Right lobe of liver (tissue), 6 donors: ENCODE measurements at regions of chr2 and their contacts with region 1.

Region 1: GRCh38 chr2:26144953-26145680 is 27.8 kb upstream of the GAREM2 start:
- DNase-seq: peak in 2 of 3 donors; percentile 45 to 68
- ATAC-seq: peak; percentile 87 to 91 (median 90)
- H3K4me3 ChIP-seq: no peak overlapping the region
- H3K27ac ChIP-seq: no peak overlapping the region
- H3K4me1 ChIP-seq: no peaks in the 10 kb centered on the region
- H3K27me3 ChIP-seq: no peaks in the 10 kb centered on the region
- CTCF ChIP-seq: peak; percentile 67 to 83 (median 74)
- POLR2A ChIP-seq: no peak

Region 2: GRCh38 chr2:25951071-25951547 is 194.0 kb before region 1 on chr2:
- intact Hi-C with region 1: loop called in 1 of 2 experiments (anchors 10 kb)
- DNase-seq: peak; percentile 84 to 85 (median 85)
- ATAC-seq: peak; percentile 99 to 100 (median 99)
- H3K4me3 ChIP-seq: no peak overlapping the region
- H3K27ac ChIP-seq: no peak overlapping the region
- H3K4me1 ChIP-seq: no peaks in the 10 kb centered on the region
- H3K27me3 ChIP-seq: no peaks in the 10 kb centered on the region
- CTCF ChIP-seq: peak; percentile 95 to 96 (median 96)
- POLR2A ChIP-seq: no peak

Region 3: GRCh38 chr2:25991965-25992364 is 153.2 kb before region 1 on chr2:
- intact Hi-C with region 1: loop called in 1 of 2 experiments (anchors 10 kb)
- DNase-seq: no peak
- ATAC-seq: peak; percentile 20 to 49 (median 42)
- H3K4me3 ChIP-seq: no peak overlapping the region
- H3K27ac ChIP-seq: no peak overlapping the region
- H3K4me1 ChIP-seq: peaks cover 0 to 3% (median 0%) of the 10 kb centered on the region in 4 donors
- H3K27me3 ChIP-seq: no peaks in the 10 kb centered on the region
- CTCF ChIP-seq: no peak
- POLR2A ChIP-seq: no peak

Region 4: DNA sequence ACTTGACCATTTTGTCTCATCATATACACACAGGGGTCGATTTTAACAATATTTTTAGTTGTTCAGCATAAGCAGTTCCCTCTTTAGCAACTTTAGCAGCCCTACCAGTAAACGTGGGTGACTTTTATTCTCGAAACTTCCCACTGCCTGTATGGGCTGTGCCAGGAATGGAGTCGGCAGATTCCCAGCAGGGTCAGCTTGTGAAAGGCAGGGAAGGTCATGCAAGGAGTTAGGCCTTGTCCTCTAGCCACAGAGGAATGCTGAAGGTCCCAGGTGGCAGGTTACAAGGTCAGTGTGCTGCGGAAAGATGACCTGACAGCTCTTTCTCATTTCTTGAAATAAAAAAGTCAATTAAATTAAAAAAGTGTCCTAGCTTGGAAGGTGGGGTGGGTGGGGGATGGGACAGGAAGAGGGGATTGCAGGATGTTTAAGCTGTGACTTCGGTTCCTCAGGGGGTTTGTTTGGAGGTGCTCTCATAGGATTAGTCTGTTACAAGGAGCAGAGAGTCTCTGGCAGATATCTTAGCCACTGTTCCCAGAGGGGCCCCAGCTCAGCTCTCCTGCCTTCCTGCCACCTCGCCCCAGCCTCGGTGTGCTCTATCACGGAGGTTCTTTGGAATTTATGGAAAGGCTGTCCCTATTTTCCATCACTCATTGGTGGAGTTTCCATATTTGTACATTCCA is 278.0 kb after region 1 on chr2:
- intact Hi-C with region 1: no loop called
- DNase-seq: no peak
- ATAC-seq: no peak
- H3K4me3 ChIP-seq: no peak overlapping the region
- H3K27ac ChIP-seq: no peak overlapping the region
- H3K4me1 ChIP-seq: no peaks in the 10 kb centered on the region
- H3K27me3 ChIP-seq: no peaks in the 10 kb centered on the region
- CTCF ChIP-seq: no peak
- POLR2A ChIP-seq: no peak